Activated CD8-positive, alpha-beta memory T cell treated with anti-CD3 and anti-CD28 coated beads, Interleukin-2, amount 10 ng/mL, durations not matched to agents 7 days and 5 days (primary cell): ENCODE measurements at regions of chr5 and their contacts with region 1.

Region 1: DNA sequence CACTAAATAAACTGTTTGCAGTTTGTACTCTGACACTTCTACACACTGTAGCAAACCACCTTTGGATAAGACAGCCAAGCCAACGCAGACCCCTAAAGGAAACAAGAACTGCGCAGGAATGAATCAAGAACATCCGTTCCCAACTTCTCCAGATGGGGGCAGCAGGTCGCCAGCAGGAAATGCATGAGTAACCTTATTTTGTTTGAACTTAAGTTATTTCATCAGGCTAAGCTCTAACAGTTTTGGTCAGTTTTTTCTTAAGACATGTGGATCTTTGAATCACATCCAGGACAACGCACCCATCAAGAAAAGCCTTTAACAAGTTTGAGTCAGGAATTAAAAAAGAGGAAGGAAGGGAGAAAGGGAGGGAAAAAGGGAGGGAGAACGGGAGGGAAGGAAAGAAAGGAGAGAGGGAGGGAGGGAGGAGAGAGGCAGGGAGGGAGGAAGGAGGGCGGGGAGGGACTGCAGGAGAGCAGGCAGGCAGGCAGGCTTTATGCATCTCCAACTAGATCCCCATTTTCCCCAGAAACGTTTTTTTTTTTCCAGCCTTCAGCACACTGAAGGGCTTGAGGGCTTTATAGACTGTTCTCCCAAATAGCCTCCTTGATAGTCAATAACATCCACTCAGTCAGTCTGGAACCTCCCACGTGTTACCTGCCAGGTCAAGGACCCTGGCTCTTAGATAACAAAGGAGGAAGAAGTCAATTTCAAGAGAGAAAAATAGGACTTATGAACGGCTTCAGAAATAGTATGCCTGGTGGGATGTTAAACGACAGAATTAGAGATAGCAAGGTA is 22.2 kb downstream of the BHMT start:
- DNase-seq: peak; percentile 80
- ATAC-seq: peak; percentile 80
- H3K4me3 Mint-ChIP-seq: peak overlapping the region; percentile 33
- H3K27ac Mint-ChIP-seq: peak overlapping the region; percentile 80
- H3K4me1 Mint-ChIP-seq: peaks cover 13% of the 10 kb centered on the region
- H3K27me3 Mint-ChIP-seq: peaks cover 3% of the 10 kb centered on the region

Region 2: GRCh38 chr5:78886341-78887230 is 247.3 kb before region 1 on chr5:
- CTCF ChIA-PET with region 1: interaction called, 16 read pairs
- DNase-seq: no peak
- ATAC-seq: no peak
- H3K4me3 Mint-ChIP-seq: no peak overlapping the region
- H3K27ac Mint-ChIP-seq: no peak overlapping the region
- H3K4me1 Mint-ChIP-seq: peaks cover 19% of the 10 kb centered on the region
- H3K27me3 Mint-ChIP-seq: peaks cover 27% of the 10 kb centered on the region

Region 3: GRCh38 chr5:78984439-78985115 is 149.3 kb before region 1 on chr5:
- CTCF ChIA-PET with region 1: interaction called, 19 read pairs
- DNase-seq: peak; percentile 82
- ATAC-seq: peak; percentile 72
- H3K4me3 Mint-ChIP-seq: peak overlapping the region; percentile 89
- H3K27ac Mint-ChIP-seq: peak overlapping the region; percentile 91
- H3K4me1 Mint-ChIP-seq: peaks cover 45% of the 10 kb centered on the region
- H3K27me3 Mint-ChIP-seq: peaks cover 3% of the 10 kb centered on the region

Region 4: GRCh38 chr5:79030663-79031484 is 103.0 kb before region 1 on chr5:
- CTCF ChIA-PET with region 1: interaction called, 251 read pairs
- DNase-seq: no peak
- ATAC-seq: no peak
- H3K4me3 Mint-ChIP-seq: no peak overlapping the region
- H3K27ac Mint-ChIP-seq: no peak overlapping the region
- H3K4me1 Mint-ChIP-seq: no peaks in the 10 kb centered on the region
- H3K27me3 Mint-ChIP-seq: peaks cover 23% of the 10 kb centered on the region

Region 5: DNA sequence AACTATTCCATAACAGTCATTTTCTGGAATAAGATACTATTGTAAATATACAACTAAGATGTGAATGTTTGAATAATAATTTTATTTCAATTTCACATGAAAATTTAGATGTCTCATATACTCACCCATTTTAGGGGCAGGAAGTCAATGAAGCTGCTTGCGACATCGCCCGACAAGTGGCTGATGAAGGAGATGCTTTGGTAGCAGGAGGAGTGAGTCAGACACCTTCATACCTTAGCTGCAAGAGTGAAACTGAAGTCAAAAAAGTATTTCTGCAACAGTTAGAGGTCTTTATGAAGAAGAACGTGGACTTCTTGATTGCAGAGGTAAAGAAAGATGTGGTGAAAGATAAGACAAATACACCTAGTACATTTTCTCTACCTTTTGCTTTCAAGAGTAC is 13.6 kb before region 1 on chr5:
- CTCF ChIA-PET with region 1: interaction called, 19 read pairs
- DNase-seq: no peak
- ATAC-seq: no peak
- H3K4me3 Mint-ChIP-seq: no peak overlapping the region
- H3K27ac Mint-ChIP-seq: no peak overlapping the region
- H3K4me1 Mint-ChIP-seq: no peaks in the 10 kb centered on the region
- H3K27me3 Mint-ChIP-seq: peaks cover 15% of the 10 kb centered on the region

Region 6: GRCh38 chr5:80083101-80083890 is 949.4 kb after region 1 on chr5:
- CTCF ChIA-PET with region 1: interaction called, 18 read pairs
- DNase-seq: peak; percentile 48
- ATAC-seq: peak; percentile 84
- H3K4me3 Mint-ChIP-seq: peak overlapping the region; percentile 64
- H3K27ac Mint-ChIP-seq: peak overlapping the region; percentile 82
- H3K4me1 Mint-ChIP-seq: peaks cover 18% of the 10 kb centered on the region
- H3K27me3 Mint-ChIP-seq: no peaks in the 10 kb centered on the region